Activated CD8-positive, alpha-beta T cell treated with anti-CD3 and anti-CD28 coated beads for 36 hours (primary cell): ENCODE measurements at regions of chr16 and their contacts with region 1.

Region 1: GRCh38 chr16:67935402-67936123 is 1.1 kb downstream of the PSMB10 start:
- DNase-seq: peak; percentile 99
- ATAC-seq: peak; percentile 92
- H3K4me3 Mint-ChIP-seq: peak overlapping the region; percentile 97
- H3K27ac Mint-ChIP-seq: peak overlapping the region; percentile 100
- H3K4me1 Mint-ChIP-seq: peaks cover 42% of the 10 kb centered on the region
- H3K27me3 Mint-ChIP-seq: no peaks in the 10 kb centered on the region
- CTCF ChIP-seq: no peak

Region 2: DNA sequence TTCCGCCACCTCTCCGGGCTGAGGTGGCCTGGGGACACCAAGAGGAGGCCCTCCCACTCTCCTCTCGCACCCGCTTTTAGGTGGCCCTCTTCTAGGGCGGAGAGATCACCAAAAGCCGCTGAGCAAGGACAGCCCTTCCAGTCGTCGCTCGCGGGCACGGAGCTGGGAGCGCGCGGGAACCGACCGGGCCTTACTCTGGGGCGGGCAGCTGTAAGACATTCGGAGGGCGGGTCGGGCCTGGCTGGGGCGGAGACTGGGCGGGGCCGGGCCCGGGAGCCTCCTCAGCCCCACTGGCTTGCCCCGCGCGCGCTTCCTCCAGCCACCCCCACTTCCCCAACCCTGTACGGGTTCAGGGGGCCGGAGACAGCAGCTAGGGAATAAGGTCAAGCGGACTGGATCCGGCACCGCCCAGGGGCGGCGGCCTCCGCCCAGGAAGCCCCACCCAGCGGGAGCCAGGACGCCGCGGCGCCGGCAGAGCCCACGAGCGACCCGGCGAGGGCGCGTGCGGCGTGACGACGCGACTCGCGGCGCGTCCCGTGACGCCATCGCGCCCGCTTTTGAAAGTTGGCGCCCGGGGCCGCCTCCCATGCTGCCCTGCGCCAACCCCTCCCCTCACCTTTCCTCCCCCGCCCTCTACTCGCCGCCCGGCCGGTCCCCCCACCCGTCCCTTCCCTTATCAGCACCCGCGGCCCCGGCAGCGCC is 373.6 kb before region 1 on chr16:
- CTCF ChIA-PET with region 1: no interaction called
- POLR2A ChIA-PET with region 1: interaction called, 10 read pairs
- intact Hi-C with region 1: no loop called
- DNase-seq: peak; percentile 98
- ATAC-seq: peak; percentile 88
- H3K4me3 Mint-ChIP-seq: peak overlapping the region; percentile 82
- H3K27ac Mint-ChIP-seq: peak overlapping the region; percentile 91
- H3K4me1 Mint-ChIP-seq: peaks cover 44% of the 10 kb centered on the region
- H3K27me3 Mint-ChIP-seq: no peaks in the 10 kb centered on the region
- CTCF ChIP-seq: no peak

Region 3: DNA sequence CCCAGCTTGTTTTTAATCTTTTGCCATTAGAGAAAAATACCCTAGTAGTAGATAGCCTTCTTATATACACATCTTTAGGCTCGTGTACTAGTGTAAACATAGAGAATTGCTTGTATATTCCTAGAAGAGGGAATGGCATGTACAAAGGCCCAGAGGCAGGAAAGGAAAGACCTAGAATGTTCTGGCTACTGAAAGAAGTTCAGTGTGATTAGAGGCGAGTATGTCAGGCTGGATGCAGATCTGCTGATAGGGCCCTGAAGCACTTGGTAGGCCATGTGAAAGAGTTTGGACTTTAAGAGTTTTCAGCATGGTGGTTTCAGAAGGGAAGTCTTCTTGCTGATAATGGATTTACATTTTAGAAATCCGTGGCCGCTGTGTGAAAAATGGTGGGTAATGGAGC is 355.9 kb before region 1 on chr16:
- CTCF ChIA-PET with region 1: no interaction called
- POLR2A ChIA-PET with region 1: no interaction called
- intact Hi-C with region 1: no loop called
- DNase-seq: no peak
- ATAC-seq: no peak
- H3K4me3 Mint-ChIP-seq: no peak overlapping the region
- H3K27ac Mint-ChIP-seq: peak overlapping the region; percentile 47
- H3K4me1 Mint-ChIP-seq: peaks cover 15% of the 10 kb centered on the region
- H3K27me3 Mint-ChIP-seq: no peaks in the 10 kb centered on the region
- CTCF ChIP-seq: no peak

Region 4: DNA sequence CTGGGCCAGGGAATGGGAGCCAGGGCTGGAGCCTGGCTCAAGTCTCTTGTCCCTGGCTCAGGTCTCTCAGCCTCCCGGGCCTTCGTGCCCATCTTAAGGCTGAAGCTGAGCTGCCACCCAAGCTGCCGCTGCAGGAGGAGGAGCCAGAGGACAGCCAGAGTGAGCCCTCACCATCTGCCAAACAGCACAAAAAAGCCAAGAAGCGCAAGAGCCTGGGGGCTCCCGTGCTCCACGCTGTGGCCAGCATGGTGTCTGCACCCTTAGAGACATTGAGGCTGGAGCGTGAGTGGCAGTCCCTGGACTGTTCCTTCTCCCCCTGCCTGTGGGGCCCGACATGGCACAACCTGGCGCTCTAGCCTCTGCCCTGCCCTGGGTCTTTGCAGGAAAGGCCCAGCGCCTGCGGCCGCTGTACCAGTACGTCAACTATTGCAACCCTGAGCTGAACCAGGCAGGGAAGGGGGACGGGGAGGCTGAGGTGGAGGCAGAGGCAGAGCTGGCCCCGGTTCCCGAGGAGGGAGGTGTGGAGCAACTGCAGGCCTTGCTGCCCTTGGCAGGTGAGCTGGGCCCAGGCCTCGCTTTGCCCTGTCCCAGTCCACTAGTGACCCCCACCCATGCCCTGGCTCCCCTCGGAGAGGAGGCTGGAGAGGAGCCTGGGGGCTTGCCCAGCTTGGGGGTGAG is 267.6 kb before region 1 on chr16:
- CTCF ChIA-PET with region 1: interaction called, 4 read pairs
- POLR2A ChIA-PET with region 1: no interaction called
- intact Hi-C with region 1: loop called (anchors 10 kb)
- DNase-seq: peak; percentile 92
- ATAC-seq: peak; percentile 92
- H3K4me3 Mint-ChIP-seq: peak overlapping the region; percentile 80
- H3K27ac Mint-ChIP-seq: no peak overlapping the region
- H3K4me1 Mint-ChIP-seq: peaks cover 11% of the 10 kb centered on the region
- H3K27me3 Mint-ChIP-seq: no peaks in the 10 kb centered on the region
- CTCF ChIP-seq: peak; percentile 73

Region 5: GRCh38 chr16:67892899-67893742 is 42.4 kb before region 1 on chr16 and contains the start of gene PSKH1:
- CTCF ChIA-PET with region 1: interaction called, 16 read pairs
- POLR2A ChIA-PET with region 1: interaction called, 8 read pairs
- intact Hi-C with region 1: no loop called
- DNase-seq: peak; percentile 97
- ATAC-seq: peak; percentile 100
- H3K4me3 Mint-ChIP-seq: peak within 1 kb of the TSS; percentile 97
- H3K27ac Mint-ChIP-seq: peak within 1 kb of the TSS; percentile 95
- H3K4me1 Mint-ChIP-seq: peaks cover 26% of the 10 kb centered on the region
- H3K27me3 Mint-ChIP-seq: no peaks in the 10 kb centered on the region
- CTCF ChIP-seq: no peak
- total RNA-seq, gene PSKH1: 8.4 to 8.5 TPM

Region 6: GRCh38 chr16:67968400-67969253 is 33.1 kb after region 1 on chr16 and contains the start of gene SLC12A4:
- CTCF ChIA-PET with region 1: interaction called, 11 read pairs
- POLR2A ChIA-PET with region 1: interaction called, 12 read pairs
- intact Hi-C with region 1: no loop called
- DNase-seq: peak; percentile 96
- ATAC-seq: peak; percentile 92
- H3K4me3 Mint-ChIP-seq: peak within 1 kb of the TSS; percentile 95
- H3K27ac Mint-ChIP-seq: peak within 1 kb of the TSS; percentile 93
- H3K4me1 Mint-ChIP-seq: peaks cover 18% of the 10 kb centered on the region
- H3K27me3 Mint-ChIP-seq: no peaks in the 10 kb centered on the region
- CTCF ChIP-seq: no peak
- total RNA-seq, gene SLC12A4: 32.5 to 38.0 TPM

Region 7: DNA sequence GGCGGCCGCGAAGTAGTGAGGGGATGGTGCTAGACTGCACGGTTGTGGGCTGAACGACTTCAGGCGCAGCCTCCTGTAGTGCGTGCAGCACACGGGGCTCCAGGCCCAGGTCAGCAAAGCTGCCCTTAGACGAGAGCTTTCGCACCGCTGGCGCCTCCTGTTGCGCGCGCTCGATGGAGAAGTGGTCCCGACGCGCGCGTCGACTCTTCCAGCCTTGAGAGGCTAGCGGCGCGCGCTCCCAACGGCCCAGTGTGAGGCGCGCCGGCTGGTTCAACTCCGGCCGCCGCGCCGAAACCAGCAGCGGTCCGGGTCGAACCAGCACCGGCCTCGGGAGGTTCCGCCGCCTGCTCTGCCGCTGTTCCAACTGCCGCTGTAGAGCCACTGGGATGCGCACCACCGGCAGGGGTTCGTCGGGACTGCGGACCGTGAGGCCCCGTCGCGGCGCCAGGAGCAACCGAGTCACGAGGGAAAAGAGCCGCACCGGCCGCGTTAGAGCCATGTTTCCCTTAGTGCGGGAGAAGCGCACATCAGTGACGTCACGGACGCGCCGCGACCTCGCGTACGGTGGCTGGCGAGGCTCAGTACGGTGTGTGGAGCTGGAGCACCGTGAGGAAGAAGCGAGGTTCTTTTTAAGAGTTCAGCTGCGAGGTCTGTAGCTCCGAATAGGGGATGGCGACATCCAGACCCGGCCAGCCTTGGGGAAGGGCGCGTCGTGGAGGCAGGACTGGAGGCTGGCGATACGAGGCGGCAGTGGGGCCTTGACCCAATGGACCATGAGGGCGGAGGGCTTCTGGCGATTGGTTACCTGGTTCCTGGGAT is 87.3 kb after region 1 on chr16 and contains the starts of genes DDX28 and DUS2:
- CTCF ChIA-PET with region 1: interaction called, 3 read pairs
- POLR2A ChIA-PET with region 1: interaction called, 26 read pairs
- intact Hi-C with region 1: no loop called
- DNase-seq: peak; percentile 95
- ATAC-seq: peak; percentile 93
- H3K4me3 Mint-ChIP-seq: peak within 1 kb of the TSS; percentile 87
- H3K27ac Mint-ChIP-seq: peak within 1 kb of the TSS; percentile 96
- H3K4me1 Mint-ChIP-seq: peaks cover 23% of the 10 kb centered on the region
- H3K27me3 Mint-ChIP-seq: no peaks in the 10 kb centered on the region
- CTCF ChIP-seq: no peak
- total RNA-seq, gene DDX28: 16.6 to 17.3 TPM
- total RNA-seq, gene DUS2: 34.2 to 35.1 TPM

Region 8: GRCh38 chr16:68072038-68072695 is 136.6 kb after region 1 on chr16:
- CTCF ChIA-PET with region 1: no interaction called
- POLR2A ChIA-PET with region 1: no interaction called
- intact Hi-C with region 1: no loop called
- DNase-seq: no peak
- ATAC-seq: no peak
- H3K4me3 Mint-ChIP-seq: no peak overlapping the region
- H3K27ac Mint-ChIP-seq: no peak overlapping the region
- H3K4me1 Mint-ChIP-seq: peaks cover 70% of the 10 kb centered on the region
- H3K27me3 Mint-ChIP-seq: no peaks in the 10 kb centered on the region
- CTCF ChIP-seq: no peak

Region 9: GRCh38 chr16:68085259-68086071 is 149.9 kb after region 1 on chr16 and contains the start of gene NFATC3:
- CTCF ChIA-PET with region 1: no interaction called
- POLR2A ChIA-PET with region 1: interaction called, 10 read pairs
- intact Hi-C with region 1: no loop called
- DNase-seq: peak; percentile 99
- ATAC-seq: peak; percentile 68
- H3K4me3 Mint-ChIP-seq: peak within 1 kb of the TSS; percentile 88
- H3K27ac Mint-ChIP-seq: peak within 1 kb of the TSS; percentile 99
- H3K4me1 Mint-ChIP-seq: peaks cover 46% of the 10 kb centered on the region
- H3K27me3 Mint-ChIP-seq: no peaks in the 10 kb centered on the region
- CTCF ChIP-seq: no peak
- total RNA-seq, gene NFATC3: 102 to 104 TPM

Region 10: GRCh38 chr16:68100488-68100887 is 164.9 kb after region 1 on chr16:
- CTCF ChIA-PET with region 1: no interaction called
- POLR2A ChIA-PET with region 1: no interaction called
- intact Hi-C with region 1: no loop called
- DNase-seq: no peak
- ATAC-seq: peak; percentile 61
- H3K4me3 Mint-ChIP-seq: no peak overlapping the region
- H3K27ac Mint-ChIP-seq: peak overlapping the region; percentile 13
- H3K4me1 Mint-ChIP-seq: peaks cover 71% of the 10 kb centered on the region
- H3K27me3 Mint-ChIP-seq: no peaks in the 10 kb centered on the region
- CTCF ChIP-seq: no peak